ENCODE measurements at regions of chr2 and their contacts with region 1.

Region 1: DNA sequence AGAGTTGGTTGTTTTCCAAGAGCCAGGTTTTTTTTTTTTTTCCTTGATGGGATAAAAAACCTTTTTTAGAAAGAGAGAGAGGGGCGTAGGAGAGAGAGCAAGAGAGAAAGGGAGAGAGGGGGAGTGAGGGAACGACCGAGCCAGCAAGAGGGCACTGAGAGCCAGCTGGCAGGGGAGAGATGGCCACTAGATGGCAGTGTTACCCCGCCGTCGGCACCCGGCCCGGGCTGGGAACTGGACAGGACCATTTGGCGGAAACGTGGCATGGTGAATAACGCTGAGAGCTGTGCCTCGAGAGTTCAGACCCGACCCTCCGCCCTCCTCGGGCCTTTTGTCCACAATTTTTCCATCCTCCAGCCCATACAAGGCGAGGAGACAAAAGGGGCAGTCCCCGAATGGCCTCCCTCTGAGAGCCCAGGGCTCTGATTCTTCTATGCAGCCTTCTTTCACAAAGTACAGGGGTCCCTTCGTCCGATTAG is 286.7 kb upstream of the VRK2 start:
- DNase-seq: peak; percentile 64
- ATAC-seq: peak; percentile 100
- H3K4me3 ChIP-seq: no peak overlapping the region; the same call in 1 of the 2 replicates
- H3K27ac ChIP-seq: no peak overlapping the region
- H3K4me1 ChIP-seq: no peaks in the 10 kb centered on the region
- H3K27me3 ChIP-seq: no peaks in the 10 kb centered on the region
- CTCF ChIP-seq: peak; percentile 91
- POLR2A ChIP-seq: no peak
- RAD21 ChIP-seq: peak; percentile 92

Region 2: GRCh38 chr2:57453945-57454344 is 305.9 kb before region 1 on chr2:
- CTCF ChIA-PET with region 1: no interaction called
- POLR2A ChIA-PET with region 1: no interaction called
- dilution Hi-C with region 1: no loop called
- in situ Hi-C with region 1: no loop called
- intact Hi-C with region 1: no loop called
- DNase-seq: no peak
- ATAC-seq: no peak
- H3K4me3 ChIP-seq: no peak overlapping the region
- H3K27ac ChIP-seq: no peak overlapping the region
- H3K4me1 ChIP-seq: no peaks in the 10 kb centered on the region
- H3K27me3 ChIP-seq: no peaks in the 10 kb centered on the region
- CTCF ChIP-seq: no peak
- POLR2A ChIP-seq: no peak
- RAD21 ChIP-seq: no peak

Region 3: DNA sequence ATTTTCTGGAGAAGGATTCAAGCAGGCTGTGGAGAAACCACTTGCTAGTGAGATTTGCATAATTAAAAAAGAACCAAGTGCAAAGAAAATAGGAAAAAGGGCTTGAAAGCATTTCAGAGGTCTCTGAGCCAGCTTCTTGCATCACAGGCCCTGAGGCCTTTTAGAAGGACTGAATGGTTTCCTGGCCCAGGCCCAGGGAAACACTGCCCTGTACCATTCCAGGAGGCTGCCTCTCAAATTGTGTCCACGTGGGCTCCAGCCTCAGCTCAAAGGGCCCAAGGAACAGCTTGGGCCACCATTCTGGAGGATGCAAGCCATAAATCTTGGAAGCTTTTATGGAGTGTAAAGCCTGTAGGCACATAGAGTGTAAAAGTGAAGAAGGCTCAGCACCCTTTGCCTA is 236.6 kb before region 1 on chr2:
- CTCF ChIA-PET with region 1: no interaction called
- POLR2A ChIA-PET with region 1: no interaction called
- dilution Hi-C with region 1: no loop called
- in situ Hi-C with region 1: no loop called
- intact Hi-C with region 1: no loop called
- DNase-seq: no peak
- ATAC-seq: no peak
- H3K4me3 ChIP-seq: no peak overlapping the region
- H3K27ac ChIP-seq: no peak overlapping the region
- H3K4me1 ChIP-seq: no peaks in the 10 kb centered on the region
- H3K27me3 ChIP-seq: no peaks in the 10 kb centered on the region
- CTCF ChIP-seq: no peak
- POLR2A ChIP-seq: no peak
- RAD21 ChIP-seq: no peak

Region 4: DNA sequence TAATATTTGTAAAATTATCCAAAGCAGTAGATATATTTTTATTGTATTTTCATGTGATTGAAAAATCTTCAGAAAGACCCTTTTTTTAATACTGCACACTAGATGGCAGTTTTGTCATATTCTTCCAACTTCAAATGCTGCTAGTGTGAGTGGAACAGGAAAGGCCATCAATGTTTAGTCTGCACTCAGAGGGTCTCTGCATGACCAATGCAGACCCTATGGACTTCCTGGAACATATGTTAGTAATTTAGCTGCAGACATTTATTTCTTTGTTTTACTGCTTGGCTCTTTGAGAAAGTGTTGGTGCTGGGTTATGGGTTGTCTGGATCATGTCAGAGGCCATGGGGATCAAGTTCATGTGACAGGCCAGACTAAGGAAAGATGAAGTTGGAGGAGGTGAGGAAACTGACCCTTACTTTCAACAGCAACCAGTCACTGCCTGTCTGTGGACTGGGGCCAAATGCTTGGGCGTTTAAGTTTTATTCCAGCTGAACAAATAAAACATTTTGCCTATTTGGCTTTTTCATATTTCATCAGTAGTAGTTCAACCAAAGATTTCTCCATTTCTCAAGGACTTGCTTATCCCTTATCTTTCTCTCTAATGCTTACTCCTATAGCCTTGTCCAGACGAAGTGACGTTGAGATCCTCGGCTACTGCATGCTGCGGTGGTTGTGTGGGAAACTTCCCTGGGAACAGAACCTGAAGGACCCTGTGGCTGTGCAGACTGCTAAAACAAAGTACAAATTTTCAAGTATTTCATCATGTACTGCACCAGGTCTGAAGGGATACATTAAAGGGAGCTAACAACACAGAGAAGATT is 371.5 kb after region 1 on chr2:
- CTCF ChIA-PET with region 1: no interaction called
- POLR2A ChIA-PET with region 1: no interaction called
- dilution Hi-C with region 1: no loop called
- in situ Hi-C with region 1: no loop called
- intact Hi-C with region 1: loop called (anchors 5 kb)
- DNase-seq: peak; percentile 63
- ATAC-seq: peak; percentile 52
- H3K4me3 ChIP-seq: no peak overlapping the region
- H3K27ac ChIP-seq: peak overlapping the region; percentile 28; the same call in 1 of the 2 replicates
- H3K4me1 ChIP-seq: peaks cover 6% of the 10 kb centered on the region
- H3K27me3 ChIP-seq: no peaks in the 10 kb centered on the region
- CTCF ChIP-seq: peak; percentile 37
- POLR2A ChIP-seq: no peak
- RAD21 ChIP-seq: peak; percentile 32; the same call in 1 of the 2 replicates

Region 5: DNA sequence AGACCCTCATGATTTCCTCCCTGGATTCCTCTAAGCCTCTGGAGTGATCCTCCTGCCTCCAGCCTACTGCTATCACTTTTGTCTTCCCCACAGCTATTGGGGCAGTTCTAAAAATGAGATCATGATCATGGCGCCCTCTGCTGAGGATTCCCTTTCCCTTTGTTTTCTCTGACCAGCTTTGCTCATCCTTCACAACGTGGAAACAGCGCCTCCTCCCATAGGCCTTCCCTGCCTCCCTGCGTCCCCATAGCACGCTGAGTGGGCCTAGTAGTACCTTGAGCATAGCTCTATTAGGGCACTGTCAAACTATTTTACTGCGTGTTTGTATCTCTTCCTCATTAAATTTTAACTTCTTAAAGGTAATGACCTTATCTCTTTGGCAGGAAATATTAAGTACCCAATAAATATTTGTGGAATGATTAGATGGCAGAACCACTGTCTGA is 688.2 kb after region 1 on chr2:
- CTCF ChIA-PET with region 1: interaction called, 5 read pairs
- POLR2A ChIA-PET with region 1: no interaction called
- dilution Hi-C with region 1: no loop called
- in situ Hi-C with region 1: no loop called
- intact Hi-C with region 1: loop called (anchors 2 kb)
- DNase-seq: peak; percentile 62
- ATAC-seq: peak; percentile 96
- H3K4me3 ChIP-seq: no peak overlapping the region
- H3K27ac ChIP-seq: no peak overlapping the region
- H3K4me1 ChIP-seq: no peaks in the 10 kb centered on the region
- H3K27me3 ChIP-seq: no peaks in the 10 kb centered on the region
- CTCF ChIP-seq: peak; percentile 70
- POLR2A ChIP-seq: no peak
- RAD21 ChIP-seq: peak; percentile 63

Region 6: DNA sequence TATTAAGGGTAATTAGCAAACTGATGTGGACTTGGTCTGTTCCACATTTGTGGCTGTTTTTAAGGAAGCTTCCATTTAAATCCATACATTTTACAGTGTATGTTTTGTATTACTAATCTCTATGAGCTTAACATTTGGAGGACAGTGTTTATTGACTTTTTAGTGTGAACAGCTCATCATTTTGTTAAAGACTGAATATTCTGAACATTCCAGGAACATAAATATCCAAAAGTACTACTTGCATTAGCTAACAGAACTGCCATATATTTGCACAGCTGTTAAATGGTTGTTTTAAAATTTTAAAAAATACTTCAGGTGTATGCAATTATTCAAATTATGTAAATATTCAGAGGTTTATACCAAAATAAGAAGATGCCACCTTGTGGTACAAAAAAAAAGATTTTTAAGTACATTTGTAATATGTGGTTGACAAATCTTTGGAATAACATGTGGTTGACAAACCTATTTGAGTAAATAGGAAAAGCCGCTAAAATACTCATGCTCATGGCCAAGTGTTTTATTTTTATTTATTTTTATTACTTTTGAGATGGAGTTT is 921.0 kb after region 1 on chr2:
- CTCF ChIA-PET with region 1: interaction called, 3 read pairs
- POLR2A ChIA-PET with region 1: no interaction called
- dilution Hi-C with region 1: no loop called
- in situ Hi-C with region 1: loop called (anchors 25 kb)
- intact Hi-C with region 1: loop called (anchors 5 kb)
- DNase-seq: no peak
- ATAC-seq: no peak
- H3K4me3 ChIP-seq: no peak overlapping the region
- H3K27ac ChIP-seq: no peak overlapping the region
- H3K4me1 ChIP-seq: no peaks in the 10 kb centered on the region
- H3K27me3 ChIP-seq: no peaks in the 10 kb centered on the region
- CTCF ChIP-seq: no peak
- POLR2A ChIP-seq: no peak
- RAD21 ChIP-seq: no peak

Measured in IMR-90 (cell line).